Sciatic nerve (tissue), 2 donors: ENCODE measurements at regions of chr2 and their contacts with region 1.

Region 1: GRCh38 chr2:99615247-99615771 is 125.5 kb upstream of the REV1 start:
- DNase-seq: no peak
- ATAC-seq: peak; percentile 25

Region 2: GRCh38 chr2:99636144-99637034 is 21.1 kb after region 1 on chr2:
- intact Hi-C with region 1: no loop called
- DNase-seq: peak; percentile 78
- ATAC-seq: peak; percentile 85

Region 3: DNA sequence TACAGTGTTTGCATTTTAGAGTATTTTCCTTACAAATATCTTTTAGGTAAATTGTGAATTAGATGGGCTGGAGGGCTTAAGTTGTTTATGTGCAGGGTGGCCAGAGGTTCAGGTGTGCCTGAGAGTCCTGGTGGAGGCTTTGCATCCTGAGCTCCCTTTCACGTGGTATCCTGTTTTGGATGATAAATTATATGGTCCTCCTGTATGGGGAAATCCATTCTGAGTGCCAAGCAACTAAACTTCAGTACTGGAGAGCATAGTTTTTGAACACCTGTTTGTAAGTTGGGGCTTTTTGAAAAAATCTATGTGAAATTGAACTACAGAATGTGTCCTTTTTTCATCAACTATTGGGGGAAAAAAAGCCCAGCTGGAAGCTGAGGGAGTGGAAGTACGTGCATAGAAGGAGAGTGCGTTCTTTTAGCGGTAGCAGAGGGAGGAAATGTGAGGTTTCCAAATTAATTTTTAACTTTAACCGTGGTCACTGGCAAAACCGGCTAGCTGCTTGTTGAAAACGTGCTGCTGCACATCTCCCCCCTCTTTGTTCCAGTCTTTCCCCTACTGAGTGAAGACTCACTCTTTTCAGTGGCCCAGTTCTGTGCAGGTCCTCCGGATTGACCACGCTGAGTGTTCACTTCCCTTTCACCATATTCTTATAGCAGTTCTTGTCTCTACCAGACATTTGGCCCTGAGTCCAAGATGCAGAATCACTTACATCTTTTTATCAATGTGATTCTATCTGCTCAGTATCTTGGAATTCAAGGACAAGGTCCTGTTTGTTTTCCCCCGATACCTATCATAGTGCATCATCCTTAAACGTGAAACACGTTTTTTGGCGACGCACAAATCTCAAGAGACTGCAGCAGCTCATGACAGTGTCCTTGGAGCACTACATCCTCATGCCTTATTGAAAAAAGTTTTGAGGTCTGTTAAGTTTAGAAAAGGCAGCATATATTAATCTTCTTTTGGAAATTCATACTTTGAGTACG is 1652.7 kb after region 1 on chr2:
- intact Hi-C with region 1: loop called (anchors 5 kb)
- DNase-seq: no peak
- ATAC-seq: no peak